H1 (cell line): ENCODE measurements at regions of chr10 and their contacts with region 1.

Region 1: GRCh38 chr10:128011175-128011979 is 104.5 kb downstream of the PTPRE start:
- DNase-seq: peak; percentile 47 to 98
- H3K4me3 ChIP-seq: no peak overlapping the region; a peak in 1 of 8 replicates
- H3K27ac ChIP-seq: no peak overlapping the region
- H3K4me1 ChIP-seq: peaks cover 0 to 4% (median 0%) of the 10 kb centered on the region in 4 experiments; a peak in 1 of 7 replicates
- H3K27me3 ChIP-seq: no peaks in the 10 kb centered on the region; a peak in 1 of 7 replicates
- CTCF ChIP-seq: peak; percentile 94 to 98 (median 98)
- EP300 ChIP-seq: no peak
- POLR2A ChIP-seq: no peak
- RAD21 ChIP-seq: peak; percentile 94 to 95

Region 2: DNA sequence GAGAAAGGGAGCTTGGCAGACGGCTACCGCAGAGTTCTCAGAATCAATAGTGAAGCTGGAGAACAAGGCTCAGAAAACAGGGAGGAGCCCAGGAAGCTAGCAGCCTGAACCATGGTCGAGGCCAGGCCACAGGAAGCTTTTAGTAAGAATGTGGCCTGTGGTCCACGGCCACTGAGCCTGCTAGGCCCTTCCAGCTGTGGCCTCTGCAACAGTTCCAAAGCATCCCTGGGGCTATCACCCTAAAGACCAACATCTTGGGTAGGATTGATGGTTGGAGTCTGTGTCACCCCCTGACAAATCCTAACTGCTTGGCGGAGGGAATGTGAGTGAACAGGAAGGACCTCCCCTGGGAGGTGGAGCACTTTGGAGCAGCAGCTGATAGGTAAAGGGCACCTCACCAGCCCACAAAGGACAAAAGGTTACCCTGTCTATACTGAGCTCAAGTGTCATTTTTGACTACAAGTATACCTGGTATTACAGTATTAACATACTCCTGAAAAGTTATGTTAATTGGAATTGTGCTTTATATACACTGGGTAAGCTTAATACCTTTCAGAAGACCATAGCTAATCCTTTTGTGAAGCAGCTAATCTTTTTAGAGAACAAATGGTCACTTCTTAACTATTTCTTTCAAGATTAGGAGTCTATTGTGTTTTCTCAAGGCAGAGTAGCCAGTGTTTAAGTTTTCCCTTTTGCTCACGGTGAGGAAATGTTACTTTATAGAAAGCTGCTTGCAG is 85.7 kb before region 1 on chr10:
- CTCF ChIA-PET with region 1: interaction called, 14 read pairs
- POLR2A ChIA-PET with region 1: no interaction called
- DNase-seq: no peak
- H3K4me3 ChIP-seq: no peak overlapping the region
- H3K27ac ChIP-seq: no peak overlapping the region
- H3K4me1 ChIP-seq: no peaks in the 10 kb centered on the region
- H3K27me3 ChIP-seq: no peaks in the 10 kb centered on the region
- CTCF ChIP-seq: no peak
- EP300 ChIP-seq: no peak
- POLR2A ChIP-seq: no peak
- RAD21 ChIP-seq: no peak

Region 3: GRCh38 chr10:128000471-128001362 is 10.7 kb before region 1 on chr10:
- CTCF ChIA-PET with region 1: interaction called, 23 read pairs
- POLR2A ChIA-PET with region 1: no interaction called
- DNase-seq: no peak
- H3K4me3 ChIP-seq: no peak overlapping the region
- H3K27ac ChIP-seq: no peak overlapping the region
- H3K4me1 ChIP-seq: no peaks in the 10 kb centered on the region
- H3K27me3 ChIP-seq: no peaks in the 10 kb centered on the region
- CTCF ChIP-seq: no peak
- EP300 ChIP-seq: no peak
- POLR2A ChIP-seq: no peak
- RAD21 ChIP-seq: no peak

Region 4: DNA sequence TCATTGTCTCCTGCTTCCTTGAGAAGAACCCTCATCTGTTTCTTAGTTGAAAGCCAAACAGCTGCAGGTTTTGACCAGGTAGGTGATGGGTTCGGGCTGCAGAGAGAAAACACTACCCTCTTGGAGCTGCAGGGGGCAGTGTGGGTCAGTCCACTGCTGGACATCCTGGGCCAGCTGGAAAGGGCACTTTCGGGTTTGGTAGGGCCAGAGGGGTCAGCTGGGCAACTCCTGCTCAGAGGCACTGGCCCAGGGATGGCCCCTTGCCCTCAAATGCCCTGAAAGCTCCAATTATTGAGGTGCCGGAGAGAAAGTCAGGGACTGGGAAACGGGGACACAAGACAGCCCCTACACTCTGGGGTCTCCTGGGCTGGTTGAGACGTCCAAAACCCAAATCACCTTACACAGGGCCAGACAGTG is 24.2 kb after region 1 on chr10:
- CTCF ChIA-PET with region 1: interaction called, 34 read pairs
- POLR2A ChIA-PET with region 1: no interaction called
- DNase-seq: peak; percentile 23 to 95
- H3K4me3 ChIP-seq: no peak overlapping the region
- H3K27ac ChIP-seq: no peak overlapping the region
- H3K4me1 ChIP-seq: no peaks in the 10 kb centered on the region
- H3K27me3 ChIP-seq: no peaks in the 10 kb centered on the region
- CTCF ChIP-seq: peak; percentile 75 to 93 (median 90)
- EP300 ChIP-seq: no peak
- POLR2A ChIP-seq: no peak
- RAD21 ChIP-seq: peak; percentile 63 to 80

Region 5: DNA sequence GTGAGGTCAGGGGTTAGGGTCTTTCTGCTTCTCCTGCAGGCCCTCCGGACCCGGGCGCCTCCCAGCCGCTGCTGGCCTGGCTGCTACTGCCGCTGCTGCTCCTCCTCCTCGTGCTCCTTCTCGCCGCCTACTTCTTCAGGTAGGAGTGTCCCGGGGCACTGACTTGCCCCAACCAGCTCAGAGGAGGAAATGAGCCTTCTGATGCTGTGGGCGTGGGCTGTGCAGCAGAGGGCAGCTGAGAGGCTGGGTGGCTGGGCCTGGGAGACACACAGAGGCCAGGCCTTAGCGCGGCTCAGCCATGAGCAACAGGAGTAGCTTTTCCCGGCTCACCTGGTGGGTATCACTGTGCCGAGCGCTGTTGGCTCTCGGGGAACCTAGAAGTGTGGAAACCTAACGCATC is 36.0 kb after region 1 on chr10:
- CTCF ChIA-PET with region 1: interaction called, 13 read pairs
- POLR2A ChIA-PET with region 1: no interaction called
- DNase-seq: peak; percentile 15 to 71
- H3K4me3 ChIP-seq: no peak overlapping the region
- H3K27ac ChIP-seq: no peak overlapping the region
- H3K4me1 ChIP-seq: peaks cover 0 to 2% (median 0%) of the 10 kb centered on the region in 4 experiments; a peak in 2 of 7 replicates
- H3K27me3 ChIP-seq: no peaks in the 10 kb centered on the region
- CTCF ChIP-seq: no peak
- EP300 ChIP-seq: no peak; a peak in 1 of 3 replicates
- POLR2A ChIP-seq: peak in 1 of 2 experiments; percentile 40; a peak in 1 of 3 replicates
- RAD21 ChIP-seq: no peak